AG04449 (cell line): ENCODE measurements at regions of chr1 and their contacts with region 1.

Region 1: DNA sequence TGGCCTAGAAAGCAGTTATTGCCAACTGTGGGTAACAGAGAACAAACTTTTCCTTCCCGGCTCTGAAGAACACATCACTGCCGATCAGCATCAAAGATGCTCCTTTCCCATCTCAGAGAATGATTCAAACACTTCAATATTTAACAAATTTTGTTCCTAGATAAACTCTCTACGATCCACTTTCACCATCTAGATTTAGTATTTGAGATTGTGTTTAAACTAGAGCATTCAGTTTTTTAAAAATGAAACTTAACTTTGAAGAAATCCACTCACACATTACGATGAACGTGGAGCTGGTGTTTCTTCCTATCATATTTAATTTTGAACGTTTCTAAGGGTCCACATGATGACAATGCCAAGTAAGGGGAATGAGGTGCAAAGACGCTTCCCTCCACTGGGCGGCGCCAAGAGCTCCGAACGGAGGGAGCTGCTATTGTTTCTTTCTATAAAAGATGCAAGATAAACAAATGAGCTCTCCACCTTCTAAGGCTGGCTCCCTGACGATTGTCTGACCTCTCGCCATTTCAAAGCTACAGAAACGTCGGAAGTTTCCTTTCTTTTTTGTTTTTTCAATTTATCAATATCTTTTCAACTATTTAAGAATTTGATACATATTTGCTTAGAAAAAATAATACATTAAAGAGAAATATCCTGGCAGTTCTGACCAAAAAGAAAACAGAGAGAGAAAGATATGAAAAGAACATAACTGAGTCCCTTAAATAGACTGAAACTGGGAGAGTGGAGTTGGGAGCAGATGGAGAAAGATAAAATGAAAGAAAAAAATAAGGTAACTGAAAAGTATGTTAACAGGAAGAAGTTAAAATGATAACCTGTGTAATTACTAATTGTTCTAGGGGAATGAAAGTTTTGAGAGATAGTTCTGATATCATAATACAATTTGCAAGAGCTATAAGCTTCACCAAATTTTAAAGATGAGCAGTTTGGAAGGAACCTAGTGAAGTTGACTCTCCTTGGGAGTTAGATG is 4.4 kb upstream of the BARHL2 start:
- DNase-seq: no peak
- H3K4me3 ChIP-seq: no peak overlapping the region
- CTCF ChIP-seq: peak; percentile 80

Region 2: GRCh38 chr1:90710579-90711536 is 10.6 kb before region 1 on chr1:
- CTCF ChIA-PET with region 1: interaction called, 15 read pairs
- POLR2A ChIA-PET with region 1: no interaction called
- DNase-seq: no peak
- H3K4me3 ChIP-seq: no peak overlapping the region
- CTCF ChIP-seq: no peak

Region 3: DNA sequence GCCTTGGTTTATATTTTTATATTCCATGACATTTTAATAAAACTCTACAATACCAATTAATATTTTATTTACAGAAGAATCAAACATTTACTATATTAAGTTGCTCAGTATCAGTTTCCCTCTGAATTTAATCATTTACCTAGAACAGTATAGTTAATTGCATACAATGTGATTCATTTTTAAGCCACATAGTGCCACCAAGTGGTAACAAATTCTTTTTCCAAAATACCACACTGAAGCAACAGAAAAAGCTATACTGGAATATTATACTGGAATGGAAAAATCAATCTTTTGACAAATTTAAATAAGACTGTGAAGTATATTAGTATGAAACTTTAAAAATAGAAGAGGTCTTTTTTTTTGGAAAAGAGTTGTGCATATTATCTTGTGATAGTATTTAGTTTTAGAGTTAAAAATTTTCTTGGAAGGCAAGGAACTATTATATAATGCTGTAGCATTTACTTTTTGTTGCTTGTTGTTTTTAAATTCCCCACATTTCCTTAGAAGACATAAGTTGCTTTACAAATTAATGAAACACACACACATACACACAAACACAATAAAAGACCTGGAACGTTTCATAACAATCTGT is 243.0 kb after region 1 on chr1:
- CTCF ChIA-PET with region 1: interaction called, 15 read pairs
- POLR2A ChIA-PET with region 1: no interaction called
- DNase-seq: no peak
- H3K4me3 ChIP-seq: no peak overlapping the region
- CTCF ChIP-seq: peak; percentile 4

Region 4: DNA sequence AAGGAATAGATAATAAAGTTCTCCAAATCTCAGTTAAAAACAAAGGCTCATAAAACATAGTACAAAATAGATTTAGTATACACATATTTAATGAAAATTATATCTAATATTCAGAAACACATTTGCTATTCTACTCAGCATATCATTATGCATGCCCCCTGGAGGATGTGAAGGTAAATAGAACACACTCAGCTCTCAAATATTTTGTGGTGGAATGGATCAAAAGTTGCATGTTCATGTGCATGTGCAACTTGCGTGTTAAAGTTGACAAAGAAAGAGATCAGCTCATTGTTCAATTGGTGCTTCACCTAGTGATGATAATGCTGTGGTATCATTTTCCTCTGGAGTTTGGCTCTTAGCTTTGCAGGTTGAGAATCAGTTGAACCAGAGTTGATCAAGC is 305.3 kb after region 1 on chr1:
- CTCF ChIA-PET with region 1: interaction called, 13 read pairs
- POLR2A ChIA-PET with region 1: no interaction called
- DNase-seq: no peak
- H3K4me3 ChIP-seq: no peak overlapping the region
- CTCF ChIP-seq: peak; percentile 35